ENCODE measurements at regions of chr5 and their contacts with region 1.

Region 1: DNA sequence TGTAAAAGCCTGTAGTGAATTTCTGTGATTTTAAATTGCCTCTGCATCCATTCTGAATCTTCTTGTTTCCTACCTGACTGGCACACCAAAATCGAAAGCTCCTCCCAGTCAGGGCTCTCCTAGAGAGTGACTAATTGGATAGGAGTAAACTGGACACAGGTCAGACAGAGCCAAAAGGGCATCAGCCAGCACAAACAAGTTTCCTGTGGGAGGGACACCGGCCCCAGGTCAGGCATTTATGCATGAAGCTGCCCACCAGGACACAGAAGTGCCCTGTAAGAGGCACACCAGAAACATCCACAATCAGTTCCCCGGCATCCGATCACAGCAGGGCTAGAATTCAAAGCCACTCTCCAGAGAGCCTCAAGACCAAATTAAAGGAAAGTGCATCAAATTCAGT is 78.4 kb downstream of the SFXN1 start:
- DNase-seq: no peak
- H3K4me3 ChIP-seq: no peak overlapping the region
- H3K4me3 Mint-ChIP-seq: no peak overlapping the region
- H3K27ac ChIP-seq: no peak overlapping the region
- H3K27ac Mint-ChIP-seq: no peak overlapping the region
- H3K4me1 ChIP-seq: no peaks in the 10 kb centered on the region
- H3K4me1 Mint-ChIP-seq: no peaks in the 10 kb centered on the region
- H3K27me3 ChIP-seq: no peaks in the 10 kb centered on the region
- H3K27me3 Mint-ChIP-seq: peaks cover 2 to 13% of the 10 kb centered on the region in 2 donors

Region 2: DNA sequence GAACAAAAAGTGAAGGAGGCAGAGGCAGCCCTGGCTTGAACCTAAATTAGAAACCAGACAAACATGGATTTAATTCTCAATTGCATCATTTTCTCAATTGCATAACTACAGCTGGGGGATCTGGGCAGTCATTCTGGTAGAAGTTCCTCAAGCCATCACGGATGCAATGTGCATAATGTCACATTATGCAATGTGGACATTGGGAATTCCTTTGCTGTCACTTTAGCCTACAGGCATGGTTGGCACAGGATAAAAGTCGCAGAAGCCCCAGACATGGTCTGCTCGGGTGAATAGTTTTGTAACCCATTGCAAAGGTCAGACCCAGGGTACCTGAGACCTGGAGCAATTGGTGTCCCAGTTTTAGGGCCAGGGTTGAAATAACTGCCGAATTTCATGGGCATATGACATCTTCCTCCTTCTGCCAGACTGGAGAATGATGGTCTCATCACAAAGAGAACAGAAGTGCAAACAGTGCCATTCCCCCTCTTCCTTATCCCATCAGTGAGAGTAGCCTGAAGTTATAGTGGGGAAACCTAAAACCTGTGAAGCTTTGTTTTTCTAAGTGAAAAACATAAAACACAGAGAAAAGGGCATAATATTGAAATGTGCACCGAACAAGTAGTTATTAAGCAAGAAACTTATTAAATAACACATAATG is 541.6 kb before region 1 on chr5:
- CTCF ChIA-PET with region 1: no interaction called
- POLR2A ChIA-PET with region 1: no interaction called
- intact Hi-C with region 1: no loop called
- DNase-seq: no peak
- H3K4me3 ChIP-seq: no peak overlapping the region
- H3K4me3 Mint-ChIP-seq: no peak overlapping the region
- H3K27ac ChIP-seq: no peak overlapping the region
- H3K27ac Mint-ChIP-seq: no peak overlapping the region
- H3K4me1 ChIP-seq: no peaks in the 10 kb centered on the region
- H3K4me1 Mint-ChIP-seq: no peaks in the 10 kb centered on the region
- H3K27me3 ChIP-seq: no peaks in the 10 kb centered on the region
- H3K27me3 Mint-ChIP-seq: peaks cover 3 to 7% of the 10 kb centered on the region in 2 donors

Region 3: DNA sequence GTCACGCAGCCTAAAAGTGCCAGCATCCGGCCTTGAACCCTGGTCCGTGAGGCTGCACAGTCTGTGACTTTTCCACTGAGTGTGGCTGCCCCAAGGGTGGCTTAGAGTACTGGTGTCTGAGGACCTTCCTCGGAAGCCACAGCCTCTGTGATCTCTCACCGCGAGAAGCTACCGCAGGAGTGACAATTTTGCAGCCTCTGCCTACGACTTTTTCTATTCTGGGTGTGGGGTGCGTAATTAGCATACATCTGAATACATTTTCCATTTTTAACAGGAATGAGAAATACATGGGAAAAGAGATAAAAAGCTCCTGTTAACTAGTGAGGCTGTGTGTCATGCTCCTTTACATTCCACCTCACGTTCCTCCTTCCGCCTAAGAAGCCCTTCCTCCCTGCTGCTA is 52.7 kb after region 1 on chr5:
- CTCF ChIA-PET with region 1: no interaction called
- POLR2A ChIA-PET with region 1: no interaction called
- intact Hi-C with region 1: loop called (anchors 10 kb)
- DNase-seq: peak in 1 of 5 donors; percentile 4
- H3K4me3 ChIP-seq: no peak overlapping the region
- H3K4me3 Mint-ChIP-seq: peak overlapping the region in 3 of 8 donors; percentile 35 to 65 (median 43)
- H3K27ac ChIP-seq: no peak overlapping the region
- H3K27ac Mint-ChIP-seq: peak overlapping the region in 1 of 7 donors; percentile 65
- H3K4me1 ChIP-seq: peaks cover 12% of the 10 kb centered on the region
- H3K4me1 Mint-ChIP-seq: peaks cover 6 to 18% (median 13%) of the 10 kb centered on the region in 4 donors
- H3K27me3 ChIP-seq: no peaks in the 10 kb centered on the region
- H3K27me3 Mint-ChIP-seq: peaks cover 5 to 8% of the 10 kb centered on the region in 2 donors